PC-9 (cell line): ENCODE measurements at regions of chr3 and their contacts with region 1.

Region 1: GRCh38 chr3:104198131-104198530 is 1168.6 kb upstream of the ALCAM start:
- DNase-seq: no peak
- H3K4me3 ChIP-seq: no peak overlapping the region
- H3K27ac ChIP-seq: no peak overlapping the region
- H3K4me1 ChIP-seq: no peaks in the 10 kb centered on the region
- H3K27me3 ChIP-seq: no peaks in the 10 kb centered on the region
- CTCF ChIP-seq: no peak

Region 2: DNA sequence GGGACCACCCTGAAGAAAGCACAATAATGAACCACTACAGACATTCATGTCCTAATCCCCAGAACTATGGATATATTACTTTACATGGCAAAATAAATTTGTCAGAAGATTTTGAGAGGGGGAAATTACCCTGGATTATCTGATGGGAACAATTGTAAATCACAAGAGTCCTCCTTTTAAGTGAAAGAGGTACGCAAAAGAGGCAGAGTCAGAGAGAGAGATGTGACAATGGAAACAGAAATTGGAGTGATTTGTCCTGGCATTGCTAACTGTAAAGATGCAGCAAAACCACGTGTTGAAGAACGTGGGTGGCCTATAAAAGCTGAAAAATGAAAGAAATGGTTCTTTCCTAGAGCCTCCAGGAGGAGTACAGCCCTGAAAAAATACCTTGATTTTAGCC is 47.1 kb after region 1 on chr3:
- CTCF ChIA-PET with region 1: interaction called, 11 read pairs
- POLR2A ChIA-PET with region 1: no interaction called
- intact Hi-C with region 1: no loop called
- DNase-seq: no peak
- H3K4me3 ChIP-seq: no peak overlapping the region
- H3K27ac ChIP-seq: no peak overlapping the region
- H3K4me1 ChIP-seq: no peaks in the 10 kb centered on the region
- H3K27me3 ChIP-seq: no peaks in the 10 kb centered on the region
- CTCF ChIP-seq: no peak